ENCODE measurements at regions of chr22 and their contacts with region 1.

Region 1: GRCh38 chr22:49046546-49047361 is 780.9 kb downstream of the BRD1 start:
- DNase-seq: peak; percentile 47 to 69 (median 64)
- ATAC-seq: peak; percentile 95
- H3K4me3 ChIP-seq: no peak overlapping the region
- H3K27ac ChIP-seq: no peak overlapping the region
- H3K4me1 ChIP-seq: peaks cover 0 to 2% of the 10 kb centered on the region in 2 experiments; a peak in 1 of 5 replicates
- H3K27me3 ChIP-seq: peaks cover 2 to 28% of the 10 kb centered on the region in 2 experiments; a peak in 3 of 5 replicates
- CTCF ChIP-seq: peak; percentile 59 to 60 (median 59); a peak in 5 of 6 replicates
- EP300 ChIP-seq: no peak
- POLR2A ChIP-seq: no peak
- RAD21 ChIP-seq: peak; percentile 26 to 60; a peak in 3 of 4 replicates

Region 2: DNA sequence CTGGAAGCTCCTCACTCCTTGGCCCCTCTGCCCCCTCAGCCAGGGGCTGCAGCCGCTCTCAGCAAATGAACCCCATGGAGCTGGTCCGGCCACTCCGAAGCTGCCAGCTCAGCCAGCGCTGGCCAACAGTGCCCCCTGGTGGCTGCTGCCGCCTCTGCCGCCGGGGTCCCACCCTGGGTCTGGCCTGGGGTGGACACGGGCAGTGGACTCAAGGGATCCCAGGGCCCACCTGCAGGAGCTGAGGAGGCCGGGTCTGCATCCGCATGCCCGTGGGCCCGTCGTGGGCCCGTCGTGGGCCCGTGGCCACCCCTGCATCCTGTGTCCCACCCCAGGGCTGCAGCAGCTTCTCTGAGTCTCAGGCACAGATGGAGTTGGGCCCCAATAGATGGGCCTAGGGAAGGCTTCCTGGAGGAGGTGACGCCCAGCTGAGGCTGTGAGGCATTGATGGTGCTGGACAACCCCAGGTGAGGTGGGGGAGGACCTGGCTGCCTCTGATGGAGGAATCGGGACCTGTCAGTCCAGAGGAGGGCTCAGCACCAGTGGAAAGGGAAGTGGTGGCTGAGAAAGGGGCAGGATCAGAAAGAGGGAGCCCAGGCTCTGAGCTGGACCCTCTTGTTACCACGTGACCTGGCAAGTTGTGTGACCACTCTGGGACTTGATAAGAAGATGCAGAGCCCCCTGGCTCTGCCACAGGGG is 258.6 kb after region 1 on chr22:
- CTCF ChIA-PET with region 1: no interaction called
- POLR2A ChIA-PET with region 1: interaction called, 3 read pairs
- in situ Hi-C with region 1: loop called (anchors 25 kb)
- intact Hi-C with region 1: loop called (anchors 1 kb)
- DNase-seq: peak; percentile 60 to 75 (median 68)
- ATAC-seq: peak; percentile 98
- H3K4me3 ChIP-seq: no peak overlapping the region
- H3K27ac ChIP-seq: no peak overlapping the region
- H3K4me1 ChIP-seq: peaks cover 0 to 9% of the 10 kb centered on the region in 2 experiments; a peak in 2 of 5 replicates
- H3K27me3 ChIP-seq: peaks cover 0 to 38% of the 10 kb centered on the region in 2 experiments; a peak in 2 of 5 replicates
- CTCF ChIP-seq: peak; percentile 76 to 88 (median 76)
- EP300 ChIP-seq: no peak
- POLR2A ChIP-seq: no peak
- RAD21 ChIP-seq: peak; percentile 59 to 85

Region 3: DNA sequence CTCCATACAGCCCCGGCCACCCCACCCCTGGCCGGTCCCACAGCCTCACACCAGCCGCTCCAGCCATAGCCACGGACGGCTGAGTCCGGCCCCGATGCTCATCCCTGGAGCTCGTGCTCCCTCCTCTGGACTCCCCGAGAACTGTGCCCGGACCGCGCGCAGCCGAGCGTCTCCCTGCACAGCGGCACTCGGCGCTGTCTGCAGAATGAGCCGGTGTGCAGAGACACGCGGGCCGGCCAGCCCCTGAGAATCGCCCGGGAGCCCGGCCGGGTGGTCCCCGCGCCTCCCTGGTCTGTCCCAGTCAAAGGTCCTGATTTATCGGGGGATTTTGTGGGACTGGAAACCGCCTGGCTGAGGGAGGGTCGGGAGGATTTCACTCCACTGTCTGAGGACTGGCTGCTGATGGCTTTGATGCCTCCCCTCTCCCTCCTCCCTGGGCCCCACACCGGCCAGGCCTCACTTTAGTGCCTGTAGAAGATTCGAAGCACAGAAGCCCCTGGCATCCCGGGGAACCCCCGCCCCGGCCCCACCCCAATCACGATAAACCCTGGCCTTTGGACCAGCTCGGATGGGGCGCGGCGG is 678.2 kb after region 1 on chr22:
- CTCF ChIA-PET with region 1: no interaction called
- POLR2A ChIA-PET with region 1: no interaction called
- in situ Hi-C with region 1: no loop called
- intact Hi-C with region 1: loop called (anchors 10 kb)
- DNase-seq: peak; percentile 75 to 84 (median 78)
- ATAC-seq: peak; percentile 100
- H3K4me3 ChIP-seq: no peak overlapping the region
- H3K27ac ChIP-seq: no peak overlapping the region
- H3K4me1 ChIP-seq: peaks cover 0 to 19% of the 10 kb centered on the region in 2 experiments; a peak in 2 of 5 replicates
- H3K27me3 ChIP-seq: peaks cover 28 to 65% of the 10 kb centered on the region in 2 experiments; a peak in 4 of 5 replicates
- CTCF ChIP-seq: peak; percentile 78 to 81 (median 80)
- EP300 ChIP-seq: no peak
- POLR2A ChIP-seq: no peak
- RAD21 ChIP-seq: peak; percentile 75 to 87